SK-N-SH (cell line): ENCODE measurements at regions of chr6 and their contacts with region 1.

Region 1: DNA sequence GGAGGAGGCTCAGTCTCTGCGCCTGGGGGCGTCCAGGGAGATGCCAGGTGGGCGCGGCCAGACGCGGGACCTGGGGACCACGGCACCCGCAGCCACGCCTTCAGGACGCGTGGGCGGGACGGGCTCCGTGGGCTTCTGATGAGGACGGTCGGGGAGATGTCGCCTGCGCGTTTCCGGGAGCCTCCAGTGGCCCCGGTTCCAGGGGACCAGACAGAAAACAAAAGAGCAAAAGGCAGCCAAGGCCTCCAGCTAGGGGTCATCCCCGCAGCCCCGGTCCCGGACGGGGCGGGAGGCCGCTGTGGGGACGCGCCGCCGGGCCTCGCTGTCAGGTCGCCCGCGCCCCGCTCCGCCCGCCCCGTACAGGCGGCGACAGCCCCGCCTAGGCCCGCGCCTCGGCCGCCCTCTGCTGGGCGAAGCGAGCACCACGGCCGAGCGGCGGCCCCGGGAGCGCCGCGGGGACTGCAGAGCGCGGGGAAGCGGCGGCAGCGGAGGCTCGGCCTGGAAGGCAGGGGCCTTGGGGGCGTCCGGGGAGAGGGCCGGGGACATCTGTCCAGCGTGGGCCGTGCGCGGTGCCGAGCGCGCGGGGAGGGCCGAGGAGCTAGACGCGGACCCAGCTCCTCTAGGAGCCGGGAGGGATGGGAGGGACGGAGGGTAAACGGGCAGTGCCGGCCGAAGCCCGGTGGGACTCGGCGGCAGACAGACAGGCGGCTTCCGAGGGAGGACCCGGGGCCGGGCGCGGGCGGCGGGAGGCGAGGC is 48.7 kb downstream of the TMEM242 start:
- DNase-seq: peak; percentile 97
- H3K4me3 ChIP-seq: peak overlapping the region; percentile 54 to 71
- H3K27ac ChIP-seq: peak overlapping the region; percentile 39 to 47; a peak in 2 of 4 replicates
- H3K4me1 ChIP-seq: peaks cover 0 to 3% of the 10 kb centered on the region in 2 experiments; a peak in 1 of 4 replicates
- H3K27me3 ChIP-seq: no peaks in the 10 kb centered on the region
- CTCF ChIP-seq: peak; percentile 45
- EP300 ChIP-seq: no peak
- RAD21 ChIP-seq: peak; percentile 73

Region 2: GRCh38 chr6:157184202-157185020 is 90.2 kb before region 1 on chr6:
- CTCF ChIA-PET with region 1: interaction called, 19 read pairs
- POLR2A ChIA-PET with region 1: no interaction called
- DNase-seq: peak; percentile 84
- H3K4me3 ChIP-seq: peak overlapping the region in 1 of 2 experiments; percentile 39; a peak in 1 of 4 replicates
- H3K27ac ChIP-seq: no peak overlapping the region
- H3K4me1 ChIP-seq: peaks cover 0 to 29% of the 10 kb centered on the region in 2 experiments; a peak in 1 of 4 replicates
- H3K27me3 ChIP-seq: no peaks in the 10 kb centered on the region
- CTCF ChIP-seq: peak; percentile 90
- EP300 ChIP-seq: no peak
- RAD21 ChIP-seq: peak; percentile 93

Region 3: GRCh38 chr6:157223021-157223430 is 51.6 kb before region 1 on chr6:
- CTCF ChIA-PET with region 1: interaction called, 11 read pairs
- POLR2A ChIA-PET with region 1: no interaction called
- DNase-seq: no peak
- H3K4me3 ChIP-seq: no peak overlapping the region
- H3K27ac ChIP-seq: no peak overlapping the region
- H3K4me1 ChIP-seq: peaks cover 0 to 9% of the 10 kb centered on the region in 2 experiments; a peak in 1 of 4 replicates
- H3K27me3 ChIP-seq: no peaks in the 10 kb centered on the region
- CTCF ChIP-seq: no peak
- EP300 ChIP-seq: no peak
- RAD21 ChIP-seq: no peak

Region 4: GRCh38 chr6:157251586-157252247 is 22.9 kb before region 1 on chr6:
- CTCF ChIA-PET with region 1: interaction called, 11 read pairs
- POLR2A ChIA-PET with region 1: no interaction called
- DNase-seq: peak; percentile 82
- H3K4me3 ChIP-seq: no peak overlapping the region
- H3K27ac ChIP-seq: peak overlapping the region in 1 of 2 experiments; percentile 92; a peak in 2 of 4 replicates
- H3K4me1 ChIP-seq: peaks cover 0 to 33% of the 10 kb centered on the region in 2 experiments; a peak in 2 of 4 replicates
- H3K27me3 ChIP-seq: no peaks in the 10 kb centered on the region; the same call in 1 of the 2 replicates
- CTCF ChIP-seq: no peak
- EP300 ChIP-seq: peak in 1 of 2 experiments; percentile 62; a peak in 1 of 4 replicates
- RAD21 ChIP-seq: 0 out of 2 replicates have a peak, but pooled peaks have one; percentile 1

Region 5: DNA sequence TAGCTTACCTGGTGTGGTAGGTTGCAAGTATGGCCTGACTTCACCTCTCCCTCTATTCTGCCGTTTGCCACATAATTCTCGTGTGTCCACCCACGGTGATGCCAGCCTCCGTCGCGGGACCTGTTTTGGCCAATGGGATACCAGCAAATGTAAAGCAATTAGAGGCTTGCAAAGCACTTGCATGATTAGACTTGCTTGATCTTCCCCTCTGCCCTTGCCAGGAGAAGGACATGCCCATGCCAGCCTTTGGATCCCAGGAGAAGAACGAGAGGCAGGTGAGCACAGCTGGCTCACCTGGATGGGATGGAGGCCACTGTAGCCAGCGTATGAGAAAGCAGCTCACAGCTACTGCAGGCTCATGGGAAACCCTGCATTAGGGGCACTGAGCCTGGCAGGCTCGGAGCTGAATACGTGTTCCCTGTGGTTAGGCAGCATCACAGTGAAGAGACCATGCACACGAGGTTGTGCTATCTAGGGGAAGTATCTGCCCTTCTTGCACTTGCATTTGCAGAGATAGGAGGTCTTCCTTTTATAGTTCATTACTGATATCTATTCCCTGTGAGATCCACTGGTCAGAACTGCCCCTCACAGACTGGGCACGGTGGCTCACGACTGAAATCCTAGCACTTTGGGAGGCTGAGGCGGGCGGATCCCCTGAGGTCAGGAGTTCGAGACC is 13.8 kb before region 1 on chr6:
- CTCF ChIA-PET with region 1: interaction called, 10 read pairs
- POLR2A ChIA-PET with region 1: no interaction called
- DNase-seq: no peak
- H3K4me3 ChIP-seq: no peak overlapping the region
- H3K27ac ChIP-seq: no peak overlapping the region
- H3K4me1 ChIP-seq: no peaks in the 10 kb centered on the region
- H3K27me3 ChIP-seq: no peaks in the 10 kb centered on the region
- CTCF ChIP-seq: no peak
- EP300 ChIP-seq: no peak
- RAD21 ChIP-seq: no peak

Region 6: GRCh38 chr6:157284738-157285421 is 10.2 kb after region 1 on chr6:
- CTCF ChIA-PET with region 1: interaction called, 43 read pairs
- POLR2A ChIA-PET with region 1: no interaction called
- DNase-seq: no peak
- H3K4me3 ChIP-seq: no peak overlapping the region
- H3K27ac ChIP-seq: no peak overlapping the region
- H3K4me1 ChIP-seq: peaks cover 0 to 2% of the 10 kb centered on the region in 2 experiments; a peak in 1 of 4 replicates
- H3K27me3 ChIP-seq: no peaks in the 10 kb centered on the region
- CTCF ChIP-seq: no peak
- EP300 ChIP-seq: no peak
- RAD21 ChIP-seq: no peak